BJ (cell line): ENCODE measurements at regions of chr13 and their contacts with region 1.

Region 1: GRCh38 chr13:100588331-100589177 is at the start of gene GGACT:
- DNase-seq: no peak
- H3K4me3 ChIP-seq: peak within 1 kb of the TSS; percentile 56
- H3K27me3 ChIP-seq: no peaks in the 10 kb centered on the region; the same call in 1 of the 2 replicates
- CTCF ChIP-seq: peak; percentile 38
- polyA plus RNA-seq, gene GGACT: 7.0 and 8.5 TPM in 2 replicates

Region 2: DNA sequence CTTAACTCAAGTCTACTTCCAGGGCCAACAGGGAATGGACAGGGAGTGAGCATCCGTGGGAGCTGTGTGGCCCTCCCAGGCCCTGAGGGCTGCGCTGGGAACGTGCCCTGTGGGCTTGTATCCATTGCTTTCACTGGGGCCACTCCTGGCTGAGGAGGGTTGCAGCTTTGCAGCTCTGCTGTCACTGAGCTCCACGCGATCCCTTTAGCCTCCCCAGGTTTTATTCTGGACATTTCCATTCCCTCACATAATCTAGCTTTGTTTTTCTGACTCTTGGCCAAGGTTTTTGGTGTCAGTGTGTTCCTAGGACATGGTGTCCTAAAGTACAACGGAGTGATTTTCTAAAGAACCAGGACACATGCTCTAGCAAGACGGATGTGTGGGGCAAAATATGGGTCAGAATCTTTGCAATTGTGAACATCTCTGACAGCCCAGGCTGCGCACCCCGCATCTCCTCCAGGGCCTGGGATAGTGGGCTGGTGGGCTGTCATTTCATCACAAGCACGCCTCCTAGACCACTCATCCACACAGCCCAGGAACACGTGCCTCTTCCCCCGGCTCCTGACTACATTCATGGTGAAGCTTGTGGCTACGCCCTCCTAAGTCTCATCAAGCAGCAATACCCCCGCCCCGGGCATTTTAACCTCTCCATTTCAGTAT is 27.9 kb before region 1 on chr13:
- CTCF ChIA-PET with region 1: no interaction called
- POLR2A ChIA-PET with region 1: interaction called, 10 read pairs
- DNase-seq: no peak
- H3K4me3 ChIP-seq: no peak overlapping the region
- H3K27me3 ChIP-seq: no peaks in the 10 kb centered on the region
- CTCF ChIP-seq: no peak

Region 3: GRCh38 chr13:100600915-100601314 is 12.4 kb after region 1 on chr13:
- CTCF ChIA-PET with region 1: interaction called, 19 read pairs
- POLR2A ChIA-PET with region 1: no interaction called
- DNase-seq: no peak
- H3K4me3 ChIP-seq: no peak overlapping the region
- H3K27me3 ChIP-seq: no peaks in the 10 kb centered on the region
- CTCF ChIP-seq: no peak